Heart right ventricle (tissue), 16 donors: ENCODE measurements at regions of chr9 and their contacts with region 1.

Region 1: GRCh38 chr9:13614060-13614459 is 334.6 kb upstream of the MPDZ start:
- DNase-seq: no peak
- ATAC-seq: no peak
- H3K4me3 ChIP-seq: no peak overlapping the region
- H3K27ac ChIP-seq: no peak overlapping the region
- H3K4me1 ChIP-seq: peaks cover 0 to 8% (median 0%) of the 10 kb centered on the region in 9 donors
- H3K27me3 ChIP-seq: no peaks in the 10 kb centered on the region
- CTCF ChIP-seq: no peak

Region 2: GRCh38 chr9:13651969-13652663 is 38.1 kb after region 1 on chr9:
- intact Hi-C with region 1: loop called in 1 of 10 experiments (anchors 5 kb)
- DNase-seq: peak; percentile 24 to 63
- ATAC-seq: peak; percentile 80 to 98 (median 96)
- H3K4me3 ChIP-seq: no peak overlapping the region
- H3K27ac ChIP-seq: peak overlapping the region; percentile 38 to 83 (median 72)
- H3K4me1 ChIP-seq: peaks cover 0 to 12% (median 0%) of the 10 kb centered on the region in 9 donors
- H3K27me3 ChIP-seq: no peaks in the 10 kb centered on the region
- CTCF ChIP-seq: no peak

Region 3: GRCh38 chr9:13688994-13689600 is 75.0 kb after region 1 on chr9:
- intact Hi-C with region 1: loop called in 1 of 10 experiments (anchors 5 kb)
- DNase-seq: peak in 1 of 2 donors; percentile 19
- ATAC-seq: peak in 3 of 8 donors; percentile 33 to 38 (median 34)
- H3K4me3 ChIP-seq: no peak overlapping the region
- H3K27ac ChIP-seq: peak overlapping the region in 4 of 10 donors; percentile 1 to 54 (median 30)
- H3K4me1 ChIP-seq: peaks cover 0 to 33% (median 13%) of the 10 kb centered on the region in 9 donors
- H3K27me3 ChIP-seq: no peaks in the 10 kb centered on the region
- CTCF ChIP-seq: peak; percentile 17 to 72 (median 54)

Region 4: DNA sequence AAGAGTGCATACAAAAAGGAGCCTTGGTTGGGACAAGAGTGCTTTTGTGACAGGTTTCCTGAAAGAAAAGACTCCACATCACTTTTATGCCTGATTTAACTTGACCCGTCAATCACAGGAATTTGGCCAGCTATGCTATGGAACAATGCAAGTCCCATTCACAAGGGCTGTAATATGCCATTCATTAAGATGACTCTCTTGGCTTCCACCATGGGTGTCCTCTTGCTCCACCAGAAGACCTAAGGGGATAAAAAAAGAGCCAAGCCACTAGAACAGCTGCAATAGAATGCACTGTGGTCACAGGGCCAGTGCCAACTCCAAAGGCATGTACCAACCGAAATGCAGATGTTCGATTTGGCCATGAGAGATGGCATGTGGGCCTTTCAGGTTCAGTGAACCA is 145.5 kb after region 1 on chr9:
- intact Hi-C with region 1: no loop called
- DNase-seq: no peak
- ATAC-seq: no peak
- H3K4me3 ChIP-seq: no peak overlapping the region
- H3K27ac ChIP-seq: no peak overlapping the region
- H3K4me1 ChIP-seq: no peaks in the 10 kb centered on the region
- H3K27me3 ChIP-seq: no peaks in the 10 kb centered on the region
- CTCF ChIP-seq: no peak